Naive thymus-derived CD4-positive, alpha-beta T cell (primary cell): ENCODE measurements at regions of chr12 and their contacts with region 1.

Region 1: DNA sequence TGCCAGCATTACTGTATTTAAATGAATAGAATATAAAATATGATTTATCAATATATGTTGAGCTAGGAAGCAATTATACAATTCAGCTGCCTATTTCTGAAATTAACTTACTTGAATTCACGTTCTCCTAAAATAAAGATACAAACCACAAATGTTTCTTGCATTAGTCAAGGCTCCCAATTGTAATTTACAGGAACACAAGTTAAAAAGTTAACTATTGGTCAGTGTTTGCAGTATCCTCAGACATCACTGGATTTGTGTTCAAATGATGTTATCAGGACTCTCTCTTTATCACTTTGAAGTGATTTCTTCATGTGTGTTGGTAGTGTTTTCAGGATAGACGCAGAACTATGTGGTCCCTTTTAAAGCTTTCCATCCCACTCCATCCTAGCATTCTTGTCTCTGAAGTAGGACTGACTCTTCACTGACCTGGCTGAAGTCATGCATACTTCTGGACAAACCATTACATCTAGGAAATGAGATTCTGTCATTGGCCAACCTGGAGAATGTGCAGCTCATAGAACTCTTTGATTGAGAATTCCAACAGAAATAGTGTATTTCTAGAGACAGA is 156.1 kb downstream of the KICS2 start:
- DNase-seq: no peak
- ATAC-seq: no peak
- H3K4me3 ChIP-seq: no peak overlapping the region
- H3K4me3 Mint-ChIP-seq: no peak overlapping the region
- H3K27ac ChIP-seq: no peak overlapping the region
- H3K27ac Mint-ChIP-seq: no peak overlapping the region
- H3K4me1 ChIP-seq: no peaks in the 10 kb centered on the region
- H3K4me1 Mint-ChIP-seq: no peaks in the 10 kb centered on the region
- H3K27me3 ChIP-seq: no peaks in the 10 kb centered on the region
- H3K27me3 Mint-ChIP-seq: peaks cover 3 to 12% (median 8%) of the 10 kb centered on the region in 5 donors

Region 2: GRCh38 chr12:64004641-64005040 is 61.3 kb before region 1 on chr12:
- CTCF ChIA-PET with region 1: no interaction called
- POLR2A ChIA-PET with region 1: no interaction called
- intact Hi-C with region 1: loop called in 1 of 2 experiments (anchors 2 kb)
- DNase-seq: no peak
- ATAC-seq: no peak
- H3K4me3 ChIP-seq: no peak overlapping the region
- H3K4me3 Mint-ChIP-seq: no peak overlapping the region
- H3K27ac ChIP-seq: no peak overlapping the region
- H3K27ac Mint-ChIP-seq: no peak overlapping the region
- H3K4me1 ChIP-seq: no peaks in the 10 kb centered on the region
- H3K4me1 Mint-ChIP-seq: no peaks in the 10 kb centered on the region
- H3K27me3 ChIP-seq: no peaks in the 10 kb centered on the region
- H3K27me3 Mint-ChIP-seq: peaks cover 3 to 7% (median 4%) of the 10 kb centered on the region in 5 donors

Region 3: DNA sequence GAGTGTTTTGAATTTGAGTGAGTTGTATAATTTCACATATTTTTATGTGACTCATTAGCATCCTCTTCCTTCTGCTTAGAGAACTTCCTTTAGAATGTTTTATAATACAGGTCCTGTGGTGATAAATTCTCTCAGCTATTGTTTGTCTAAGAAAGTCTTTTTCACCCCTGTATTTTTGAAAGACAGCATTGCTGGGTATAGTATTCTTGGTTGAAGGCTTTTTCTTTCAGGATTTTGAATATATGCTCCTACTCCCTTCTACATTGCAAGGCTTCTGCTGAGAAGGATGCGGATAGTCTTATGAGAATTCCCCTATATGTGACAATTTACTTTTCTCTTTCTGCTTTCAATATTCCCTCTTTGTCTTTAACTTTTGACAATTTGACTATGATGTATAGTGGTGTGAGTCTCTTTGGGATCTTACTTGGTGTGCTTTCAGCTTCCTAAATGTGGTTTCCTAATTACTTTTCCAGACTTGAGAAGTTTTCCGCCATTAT is 1639.5 kb after region 1 on chr12:
- CTCF ChIA-PET with region 1: no interaction called
- POLR2A ChIA-PET with region 1: no interaction called
- intact Hi-C with region 1: no loop called
- DNase-seq: no peak
- ATAC-seq: no peak
- H3K4me3 ChIP-seq: no peak overlapping the region
- H3K4me3 Mint-ChIP-seq: no peak overlapping the region
- H3K27ac ChIP-seq: no peak overlapping the region
- H3K27ac Mint-ChIP-seq: no peak overlapping the region
- H3K4me1 ChIP-seq: no peaks in the 10 kb centered on the region
- H3K4me1 Mint-ChIP-seq: no peaks in the 10 kb centered on the region
- H3K27me3 ChIP-seq: no peaks in the 10 kb centered on the region
- H3K27me3 Mint-ChIP-seq: peaks cover 2 to 18% (median 10%) of the 10 kb centered on the region in 5 donors